MCF 10A (cell line): ENCODE measurements at regions of chr22 and their contacts with region 1.

Region 1: GRCh38 chr22:31148953-31149627 is 8.8 kb upstream of the PLA2G3 start:
- DNase-seq: peak; percentile 75
- H3K4me3 Mint-ChIP-seq: no peak overlapping the region
- H3K27ac Mint-ChIP-seq: peak overlapping the region; percentile 6
- H3K4me1 Mint-ChIP-seq: peaks cover 9% of the 10 kb centered on the region
- H3K27me3 Mint-ChIP-seq: no peaks in the 10 kb centered on the region
- CTCF ChIP-seq: peak; percentile 92

Region 2: DNA sequence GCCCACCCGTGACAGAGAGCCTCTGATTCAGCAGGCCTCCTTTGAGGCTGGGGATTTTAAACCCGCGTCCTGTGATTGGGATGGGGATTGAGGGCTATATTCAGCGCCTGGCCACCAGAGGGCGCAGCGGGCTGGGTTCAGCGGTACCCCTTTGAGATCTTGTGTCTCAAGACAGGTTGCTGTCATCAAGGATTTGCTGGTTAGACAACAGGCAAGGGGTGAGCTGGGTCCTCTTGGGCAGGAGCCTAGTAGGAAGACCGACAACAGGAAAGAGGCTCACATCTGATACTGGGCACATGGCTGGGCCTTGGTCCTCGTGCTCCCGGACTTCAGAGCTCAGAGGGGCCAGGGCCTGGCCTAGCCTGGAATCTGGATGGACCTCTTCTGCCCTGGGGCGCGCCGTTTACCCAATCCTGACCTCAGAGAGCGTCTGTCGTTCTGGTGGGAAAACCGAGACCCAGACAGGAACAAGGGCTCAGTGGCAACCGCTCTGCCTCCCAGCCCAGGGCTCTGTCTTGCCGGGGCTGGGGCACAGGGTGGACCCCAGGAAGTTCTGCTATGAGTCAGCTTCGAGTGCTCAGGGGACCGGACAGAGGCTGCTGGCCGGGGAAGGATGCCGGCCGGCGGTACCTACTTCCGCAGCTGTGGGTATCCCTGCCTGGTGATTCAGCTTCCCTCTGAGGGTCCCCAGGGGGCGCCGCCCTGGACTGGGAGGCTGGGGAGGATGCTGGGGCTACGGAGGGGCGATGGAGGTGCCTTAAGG is 514.4 kb before region 1 on chr22:
- CTCF ChIA-PET with region 1: no interaction called
- POLR2A ChIA-PET with region 1: no interaction called
- intact Hi-C with region 1: loop called (anchors 2 kb)
- DNase-seq: peak; percentile 90
- H3K4me3 Mint-ChIP-seq: peak overlapping the region; percentile 70
- H3K27ac Mint-ChIP-seq: no peak overlapping the region
- H3K4me1 Mint-ChIP-seq: no peaks in the 10 kb centered on the region
- H3K27me3 Mint-ChIP-seq: no peaks in the 10 kb centered on the region
- CTCF ChIP-seq: peak; percentile 93

Region 3: GRCh38 chr22:30947816-30948454 is 201.2 kb before region 1 on chr22:
- CTCF ChIA-PET with region 1: interaction called, 5 read pairs
- POLR2A ChIA-PET with region 1: interaction called, 4 read pairs
- intact Hi-C with region 1: loop called (anchors 2 kb)
- DNase-seq: peak; percentile 45
- H3K4me3 Mint-ChIP-seq: no peak overlapping the region
- H3K27ac Mint-ChIP-seq: no peak overlapping the region
- H3K4me1 Mint-ChIP-seq: no peaks in the 10 kb centered on the region
- H3K27me3 Mint-ChIP-seq: no peaks in the 10 kb centered on the region
- CTCF ChIP-seq: peak; percentile 51

Region 4: DNA sequence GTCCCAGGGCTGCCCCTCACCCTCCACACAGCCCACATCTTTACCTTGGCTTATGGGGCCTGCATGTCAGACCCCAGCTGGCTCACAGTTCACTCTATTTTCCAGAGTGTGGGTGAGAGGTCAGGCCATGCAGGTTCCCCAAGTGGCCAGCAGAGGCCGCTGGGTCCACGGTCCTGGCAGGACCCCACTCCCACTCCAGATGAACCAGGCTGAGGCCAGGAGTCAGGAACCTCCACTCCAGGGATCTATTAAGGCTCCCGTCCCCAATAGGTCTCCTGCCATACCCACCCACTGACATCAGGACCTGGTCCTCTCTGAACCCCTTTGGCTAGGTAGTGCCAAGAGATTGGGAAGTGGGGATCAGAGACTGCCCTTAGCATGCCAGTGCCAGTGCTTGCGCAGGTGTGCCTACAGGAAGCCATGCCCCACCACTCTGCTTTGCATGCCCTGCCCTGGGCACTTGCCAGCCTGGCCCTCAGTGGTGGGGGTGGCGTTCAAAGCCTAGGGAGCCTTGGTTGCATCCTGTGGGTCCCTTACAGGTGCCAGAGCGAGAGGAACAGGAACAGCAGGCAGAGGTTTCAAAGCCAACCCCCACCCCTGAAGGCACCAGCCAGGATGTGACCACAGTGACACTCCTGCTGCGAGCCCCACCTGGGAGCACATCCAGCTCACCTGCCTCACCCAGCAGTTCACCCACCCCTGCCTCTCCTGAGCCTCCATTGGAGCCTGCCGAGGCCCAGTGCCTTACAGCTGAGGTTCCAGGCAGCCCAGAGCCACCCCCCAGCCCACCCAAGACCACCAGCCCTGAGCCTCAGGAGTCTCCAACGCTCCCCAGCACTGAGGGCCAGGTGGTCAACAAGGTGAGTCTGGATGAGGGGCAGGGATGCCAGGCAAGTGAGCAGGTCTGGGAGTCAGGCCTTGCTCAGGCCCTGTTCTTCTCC is 59.7 kb before region 1 on chr22:
- CTCF ChIA-PET with region 1: interaction called, 5 read pairs
- POLR2A ChIA-PET with region 1: no interaction called
- intact Hi-C with region 1: loop called (anchors 1 kb)
- DNase-seq: peak; percentile 32
- H3K4me3 Mint-ChIP-seq: no peak overlapping the region
- H3K27ac Mint-ChIP-seq: peak overlapping the region; percentile 29
- H3K4me1 Mint-ChIP-seq: peaks cover under 1% of the 10 kb centered on the region
- H3K27me3 Mint-ChIP-seq: no peaks in the 10 kb centered on the region
- CTCF ChIP-seq: peak; percentile 78